ENCODE measurements at regions of chr13 and their contacts with region 1.

Region 1: GRCh38 chr13:94549232-94550061 is 46.5 kb downstream of the TGDS start:
- DNase-seq: peak; percentile 91 to 96
- ATAC-seq: peak; percentile 93 to 97 (median 95)
- H3K4me3 ChIP-seq: peak overlapping the region; percentile 92
- H3K27ac ChIP-seq: peak overlapping the region; percentile 91
- H3K4me1 ChIP-seq: peaks cover 7% of the 10 kb centered on the region
- H3K27me3 ChIP-seq: no peaks in the 10 kb centered on the region
- CTCF ChIP-seq: peak; percentile 6

Region 2: GRCh38 chr13:94286581-94286980 is 262.9 kb before region 1 on chr13:
- intact Hi-C with region 1: no loop called
- DNase-seq: no peak
- ATAC-seq: no peak
- H3K4me3 ChIP-seq: no peak overlapping the region
- H3K27ac ChIP-seq: no peak overlapping the region
- H3K4me1 ChIP-seq: no peaks in the 10 kb centered on the region
- H3K27me3 ChIP-seq: no peaks in the 10 kb centered on the region
- CTCF ChIP-seq: no peak

Region 3: DNA sequence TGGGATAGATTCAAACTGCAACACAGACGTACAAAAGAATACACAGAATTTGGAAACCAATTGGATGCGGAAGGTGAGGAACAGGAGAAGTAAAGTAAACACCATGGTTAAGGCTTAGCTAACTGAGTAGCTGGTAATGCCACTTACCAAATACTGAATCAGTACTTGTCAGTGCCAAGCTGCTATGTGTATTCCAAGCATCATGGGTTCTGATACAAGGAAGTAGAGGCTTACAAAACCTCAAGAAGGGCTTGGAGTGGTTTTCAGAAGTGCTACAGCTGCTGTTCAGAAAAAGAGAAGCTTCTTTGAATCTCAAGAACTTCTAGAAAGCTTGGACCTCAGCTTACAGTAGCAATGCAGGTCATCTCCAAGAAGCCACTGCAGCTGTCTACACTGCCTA is 34.1 kb before region 1 on chr13:
- intact Hi-C with region 1: no loop called
- DNase-seq: no peak
- ATAC-seq: no peak
- H3K4me3 ChIP-seq: no peak overlapping the region
- H3K27ac ChIP-seq: no peak overlapping the region
- H3K4me1 ChIP-seq: no peaks in the 10 kb centered on the region
- H3K27me3 ChIP-seq: no peaks in the 10 kb centered on the region
- CTCF ChIP-seq: no peak

Region 4: DNA sequence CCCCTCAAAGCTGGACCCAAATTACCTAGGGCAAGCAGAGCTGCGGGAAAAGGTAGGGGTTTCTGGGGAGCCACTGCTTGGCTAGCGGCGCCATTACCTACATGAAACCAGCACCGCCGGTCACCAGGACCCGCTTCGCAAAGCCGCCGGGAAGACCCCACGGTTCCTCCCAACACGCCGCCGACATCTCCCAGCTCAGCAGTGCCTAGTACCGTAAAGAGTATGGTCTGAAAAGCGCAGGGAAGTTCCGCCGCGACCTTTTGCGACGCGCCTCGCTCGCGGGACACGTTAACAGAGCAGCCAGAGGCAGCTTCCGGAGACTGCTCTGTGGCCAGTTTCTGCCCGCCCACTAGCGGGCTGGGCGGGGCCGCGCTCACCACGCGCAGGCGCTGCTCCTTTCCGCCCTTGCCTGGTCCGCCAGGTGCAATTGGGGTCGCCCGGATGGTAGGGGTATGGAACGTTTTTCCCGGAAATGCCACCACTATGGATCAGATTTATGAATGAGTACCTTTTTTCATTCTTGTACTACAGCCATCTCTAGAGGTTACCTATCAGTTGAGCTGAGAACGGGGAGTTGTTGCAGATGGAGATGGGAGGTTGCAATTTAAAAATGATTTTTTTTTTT is 46.6 kb after region 1 on chr13 and contains the start of gene TGDS:
- intact Hi-C with region 1: loop called in 1 of 2 experiments (anchors 2 kb)
- DNase-seq: peak; percentile 92 to 96
- ATAC-seq: peak; percentile 96 to 100 (median 99)
- H3K4me3 ChIP-seq: peak within 1 kb of the TSS; percentile 89
- H3K27ac ChIP-seq: peak within 1 kb of the TSS; percentile 83
- H3K4me1 ChIP-seq: peaks cover 19% of the 10 kb centered on the region
- H3K27me3 ChIP-seq: no peaks in the 10 kb centered on the region
- CTCF ChIP-seq: no peak
- total RNA-seq, gene TGDS: 3.1 to 3.8 (median 3.3) TPM

Region 5: GRCh38 chr13:94825507-94825906 is 276.1 kb after region 1 on chr13:
- intact Hi-C with region 1: no loop called
- DNase-seq: peak; percentile 52 to 68
- ATAC-seq: peak in 2 of 4 donors; percentile 21 to 24
- H3K4me3 ChIP-seq: no peak overlapping the region
- H3K27ac ChIP-seq: no peak overlapping the region
- H3K4me1 ChIP-seq: no peaks in the 10 kb centered on the region
- H3K27me3 ChIP-seq: no peaks in the 10 kb centered on the region
- CTCF ChIP-seq: no peak

Region 6: GRCh38 chr13:94864474-94864873 is 315.0 kb after region 1 on chr13:
- intact Hi-C with region 1: no loop called
- DNase-seq: no peak
- ATAC-seq: no peak
- H3K4me3 ChIP-seq: no peak overlapping the region
- H3K27ac ChIP-seq: no peak overlapping the region
- H3K4me1 ChIP-seq: no peaks in the 10 kb centered on the region
- H3K27me3 ChIP-seq: peaks cover 2 to 13% (median 4%) of the 10 kb centered on the region in 3 donors
- CTCF ChIP-seq: no peak